CD8-positive, alpha-beta memory T cell (primary cell): ENCODE measurements at regions of chr4 and their contacts with region 1.

Region 1: DNA sequence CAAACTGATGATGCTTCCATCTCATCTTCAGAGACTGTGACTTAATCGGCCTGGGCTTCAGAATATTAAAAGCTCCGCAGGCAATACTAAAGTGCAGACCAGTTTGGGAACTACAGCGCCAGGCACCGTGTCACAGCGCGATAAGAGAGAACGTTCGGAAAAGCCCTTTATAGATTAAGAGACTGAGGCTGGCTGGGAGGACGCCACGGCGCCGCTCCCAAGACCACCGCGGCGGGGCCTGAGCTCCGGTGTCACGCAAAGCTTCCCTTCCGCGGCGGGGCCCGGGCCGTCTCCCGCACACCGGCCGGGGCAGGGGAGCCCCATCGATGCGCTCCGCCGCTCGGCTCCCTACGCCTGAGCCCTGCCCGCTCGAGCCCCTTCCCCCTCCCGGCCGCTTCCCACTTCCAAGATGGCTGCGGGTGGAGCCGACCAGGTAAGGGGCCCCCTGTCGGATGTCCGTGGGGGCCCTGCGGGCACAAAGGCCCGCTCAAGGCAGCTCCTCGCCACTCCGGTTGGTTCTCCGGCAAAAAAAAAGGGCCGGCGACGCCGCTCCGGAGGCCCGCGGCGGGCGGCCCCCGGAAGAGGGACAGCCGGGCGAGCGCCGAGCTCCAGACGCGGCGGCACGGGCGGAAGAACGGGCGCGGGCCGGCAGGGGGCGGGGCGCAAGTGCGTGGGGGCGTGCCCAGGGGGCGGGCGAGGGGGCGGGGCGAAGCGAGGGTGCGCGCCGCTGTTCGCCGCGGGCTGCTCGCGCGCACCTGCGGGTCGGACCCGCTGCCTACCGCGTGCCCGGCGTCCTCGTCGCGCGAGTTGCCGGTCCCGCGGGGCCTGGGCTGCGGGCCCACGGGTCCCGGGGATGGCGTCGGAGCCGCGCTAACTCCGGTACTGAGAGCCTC is at the start of gene TBC1D14:
- DNase-seq: peak; percentile 77 to 91 (median 86)
- H3K4me3 ChIP-seq: peak within 1 kb of the TSS; percentile 64
- H3K4me3 Mint-ChIP-seq: peak within 1 kb of the TSS; percentile 89 to 96 (median 92)
- H3K27ac ChIP-seq: peak within 1 kb of the TSS; percentile 77
- H3K27ac Mint-ChIP-seq: peak within 1 kb of the TSS; percentile 86 to 97 (median 92)
- H3K4me1 ChIP-seq: peaks cover 51% of the 10 kb centered on the region
- H3K4me1 Mint-ChIP-seq: peaks cover 42 to 61% (median 49%) of the 10 kb centered on the region in 3 donors
- H3K27me3 ChIP-seq: no peaks in the 10 kb centered on the region
- H3K27me3 Mint-ChIP-seq: no peaks in the 10 kb centered on the region
- total RNA-seq, gene TBC1D14: 38.0 to 43.7 TPM

Region 2: DNA sequence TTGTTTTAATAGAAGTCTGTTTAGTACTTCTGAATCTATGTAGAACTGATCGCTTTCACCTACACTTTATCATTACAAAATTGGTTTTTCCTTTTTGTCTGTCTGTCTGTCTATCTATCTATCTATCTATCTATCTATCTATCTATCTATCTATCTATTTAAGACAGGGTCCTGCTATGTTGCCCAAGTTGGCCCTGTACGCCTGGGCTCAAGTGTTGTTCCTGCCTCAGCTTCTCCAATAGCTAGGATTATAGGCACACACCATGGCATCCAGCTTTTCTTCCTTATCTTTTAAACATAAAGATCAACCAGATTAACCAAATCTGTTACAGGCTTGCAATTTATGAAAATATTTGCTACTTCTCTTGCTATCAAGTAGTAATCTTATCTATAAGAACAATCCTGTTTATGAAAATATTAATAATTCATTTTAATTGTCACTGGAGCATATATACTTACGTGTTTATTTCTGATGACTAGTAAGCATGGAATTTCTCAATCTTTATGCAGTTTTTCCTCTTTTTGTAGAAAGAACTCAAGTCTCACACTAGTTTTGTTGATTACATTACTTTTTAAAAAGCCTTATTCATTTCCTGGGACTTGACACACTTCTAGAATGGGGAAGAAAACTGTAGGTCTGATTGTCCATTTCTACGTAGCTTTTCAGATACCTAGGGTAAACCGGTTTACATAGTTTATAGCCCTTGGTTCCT is 102.2 kb before region 1 on chr4:
- CTCF ChIA-PET with region 1: no interaction called
- POLR2A ChIA-PET with region 1: no interaction called
- DNase-seq: no peak
- H3K4me3 ChIP-seq: no peak overlapping the region
- H3K4me3 Mint-ChIP-seq: peak overlapping the region in 1 of 7 donors; percentile 28
- H3K27ac ChIP-seq: no peak overlapping the region
- H3K27ac Mint-ChIP-seq: no peak overlapping the region
- H3K4me1 ChIP-seq: peaks cover 4% of the 10 kb centered on the region
- H3K4me1 Mint-ChIP-seq: peaks cover 33 to 76% (median 56%) of the 10 kb centered on the region in 3 donors
- H3K27me3 ChIP-seq: no peaks in the 10 kb centered on the region
- H3K27me3 Mint-ChIP-seq: peaks cover 0 to 3% of the 10 kb centered on the region in 2 donors

Region 3: GRCh38 chr4:6898763-6899162 is 10.6 kb before region 1 on chr4:
- CTCF ChIA-PET with region 1: interaction called, 11 read pairs
- POLR2A ChIA-PET with region 1: interaction called, 34 read pairs
- DNase-seq: no peak
- H3K4me3 ChIP-seq: no peak overlapping the region
- H3K4me3 Mint-ChIP-seq: peak overlapping the region; percentile 7 to 84 (median 74)
- H3K27ac ChIP-seq: no peak overlapping the region
- H3K27ac Mint-ChIP-seq: peak overlapping the region; percentile 78 to 95 (median 92)
- H3K4me1 ChIP-seq: peaks cover 31% of the 10 kb centered on the region
- H3K4me1 Mint-ChIP-seq: peaks cover 28 to 43% (median 39%) of the 10 kb centered on the region in 3 donors
- H3K27me3 ChIP-seq: no peaks in the 10 kb centered on the region
- H3K27me3 Mint-ChIP-seq: no peaks in the 10 kb centered on the region

Region 4: GRCh38 chr4:6942238-6942800 is 33.0 kb after region 1 on chr4:
- CTCF ChIA-PET with region 1: interaction called, 5 read pairs
- POLR2A ChIA-PET with region 1: interaction called, 14 read pairs
- DNase-seq: peak in 4 of 5 donors; percentile 22 to 66 (median 56)
- H3K4me3 ChIP-seq: peak overlapping the region; percentile 52
- H3K4me3 Mint-ChIP-seq: peak overlapping the region; percentile 67 to 93 (median 78)
- H3K27ac ChIP-seq: peak overlapping the region; percentile 47
- H3K27ac Mint-ChIP-seq: peak overlapping the region; percentile 76 to 99 (median 88)
- H3K4me1 ChIP-seq: peaks cover 52% of the 10 kb centered on the region
- H3K4me1 Mint-ChIP-seq: peaks cover 67 to 88% (median 74%) of the 10 kb centered on the region in 3 donors
- H3K27me3 ChIP-seq: no peaks in the 10 kb centered on the region
- H3K27me3 Mint-ChIP-seq: no peaks in the 10 kb centered on the region

Region 5: DNA sequence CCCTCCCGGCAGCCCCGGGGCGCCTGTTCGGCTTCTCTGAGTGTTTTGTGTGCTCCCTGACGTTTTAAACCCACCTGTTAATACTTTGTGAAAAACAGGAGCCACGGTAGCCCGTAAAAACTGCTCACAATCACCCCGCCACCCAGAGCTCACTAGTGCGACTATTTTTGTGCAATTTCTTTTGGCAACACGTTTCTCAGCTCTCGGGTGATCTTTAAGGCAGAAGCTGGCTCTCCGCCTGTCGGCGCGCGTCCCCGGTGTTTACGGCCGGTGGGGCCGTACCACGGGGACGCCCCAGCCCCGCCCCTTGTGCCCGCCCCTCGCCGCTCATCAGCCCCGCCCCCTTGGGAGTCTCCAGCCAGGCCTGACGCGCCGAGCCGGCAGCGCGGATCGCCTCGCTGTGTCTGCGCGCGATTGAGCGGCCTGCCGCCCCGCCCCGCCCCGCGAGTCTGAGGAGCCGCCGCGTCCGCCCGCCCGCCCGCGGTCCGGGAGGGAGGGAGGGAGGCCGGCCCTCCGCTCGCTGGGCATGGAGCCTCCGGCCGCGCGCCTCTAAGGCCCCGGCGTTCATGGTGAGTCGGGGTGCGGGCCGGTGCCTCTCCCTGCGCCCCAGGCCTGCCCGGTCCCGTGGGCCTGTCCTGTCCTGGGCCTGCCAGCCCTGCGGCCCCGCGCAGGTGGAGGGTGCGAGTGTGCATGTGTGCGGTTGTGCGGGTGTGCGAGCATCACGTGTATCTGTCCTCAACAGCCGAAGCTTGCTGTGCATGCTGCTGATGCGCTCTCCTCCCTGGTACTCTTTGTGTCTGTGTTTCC is 77.7 kb after region 1 on chr4:
- CTCF ChIA-PET with region 1: interaction called, 15 read pairs
- POLR2A ChIA-PET with region 1: interaction called, 21 read pairs
- DNase-seq: peak; percentile 89 to 94 (median 90)
- H3K4me3 ChIP-seq: peak overlapping the region; percentile 84
- H3K4me3 Mint-ChIP-seq: peak overlapping the region; percentile 93 to 97 (median 96)
- H3K27ac ChIP-seq: peak overlapping the region; percentile 83
- H3K27ac Mint-ChIP-seq: peak overlapping the region; percentile 84 to 99 (median 97)
- H3K4me1 ChIP-seq: peaks cover 47% of the 10 kb centered on the region
- H3K4me1 Mint-ChIP-seq: peaks cover 66 to 92% (median 85%) of the 10 kb centered on the region in 3 donors
- H3K27me3 ChIP-seq: no peaks in the 10 kb centered on the region
- H3K27me3 Mint-ChIP-seq: no peaks in the 10 kb centered on the region

Region 6: DNA sequence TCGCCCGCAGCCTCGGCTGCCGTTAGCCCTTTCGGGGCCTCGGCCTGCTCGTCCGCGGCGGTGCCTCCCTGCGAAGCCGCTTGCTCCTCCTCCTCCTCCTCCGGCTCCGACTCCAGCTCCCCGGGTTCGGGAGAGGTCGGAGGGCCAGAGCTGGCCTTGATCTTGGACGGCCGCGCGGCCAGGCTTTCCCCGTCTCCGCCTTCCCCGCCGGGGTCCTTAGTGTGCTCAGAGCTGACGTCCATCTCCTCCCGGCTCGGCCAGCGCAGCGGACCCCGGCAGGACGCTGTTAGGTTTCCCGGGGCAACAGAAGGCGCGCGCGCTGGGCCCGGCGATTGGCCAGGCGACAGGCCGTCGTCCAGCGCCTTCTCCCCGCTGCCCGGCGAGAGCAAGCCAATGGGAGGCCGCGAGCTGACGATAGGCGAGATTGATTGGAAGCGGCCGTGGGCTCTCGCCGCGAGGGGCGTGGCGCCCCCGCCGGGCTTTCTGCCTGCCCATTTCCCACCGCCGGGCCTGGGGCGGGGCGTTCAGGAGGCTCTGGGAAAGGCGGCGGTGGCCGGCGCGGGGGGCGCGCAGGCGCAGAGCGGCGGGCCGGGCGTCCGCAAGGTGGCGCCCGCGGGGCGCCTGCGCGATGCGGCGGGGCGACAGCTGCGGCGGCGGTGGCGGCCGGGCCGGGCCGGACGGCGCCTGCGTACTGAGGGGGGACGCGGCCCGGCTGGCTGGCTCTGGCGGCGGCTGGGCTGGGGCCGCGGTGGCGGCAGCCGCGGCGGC is 133.6 kb after region 1 on chr4 and contains the start of gene TADA2B:
- CTCF ChIA-PET with region 1: interaction called, 5 read pairs
- POLR2A ChIA-PET with region 1: interaction called, 13 read pairs
- DNase-seq: peak; percentile 85 to 93 (median 91)
- H3K4me3 ChIP-seq: peak within 1 kb of the TSS; percentile 81
- H3K4me3 Mint-ChIP-seq: peak within 1 kb of the TSS; percentile 90 to 99 (median 93)
- H3K27ac ChIP-seq: peak within 1 kb of the TSS; percentile 82
- H3K27ac Mint-ChIP-seq: peak within 1 kb of the TSS; percentile 84 to 96 (median 88)
- H3K4me1 ChIP-seq: peaks cover 40% of the 10 kb centered on the region
- H3K4me1 Mint-ChIP-seq: peaks cover 41 to 53% (median 41%) of the 10 kb centered on the region in 3 donors
- H3K27me3 ChIP-seq: no peaks in the 10 kb centered on the region
- H3K27me3 Mint-ChIP-seq: no peaks in the 10 kb centered on the region
- total RNA-seq, gene TADA2B: 15.8 to 16.0 TPM

Region 7: GRCh38 chr4:7557447-7557846 is 648.1 kb after region 1 on chr4:
- CTCF ChIA-PET with region 1: no interaction called
- POLR2A ChIA-PET with region 1: no interaction called
- DNase-seq: no peak
- H3K4me3 ChIP-seq: no peak overlapping the region
- H3K4me3 Mint-ChIP-seq: no peak overlapping the region
- H3K27ac ChIP-seq: no peak overlapping the region
- H3K27ac Mint-ChIP-seq: no peak overlapping the region
- H3K4me1 ChIP-seq: no peaks in the 10 kb centered on the region
- H3K4me1 Mint-ChIP-seq: no peaks in the 10 kb centered on the region
- H3K27me3 ChIP-seq: no peaks in the 10 kb centered on the region
- H3K27me3 Mint-ChIP-seq: peaks cover 0 to 4% of the 10 kb centered on the region in 2 donors